Cardiac septum (tissue), 1 donor: ENCODE measurements at regions of chr1 and their contacts with region 1.

Region 1: GRCh38 chr1:8702850-8703810 is 114.3 kb downstream of the RERE start:
- DNase-seq: peak; percentile 95

Region 2: DNA sequence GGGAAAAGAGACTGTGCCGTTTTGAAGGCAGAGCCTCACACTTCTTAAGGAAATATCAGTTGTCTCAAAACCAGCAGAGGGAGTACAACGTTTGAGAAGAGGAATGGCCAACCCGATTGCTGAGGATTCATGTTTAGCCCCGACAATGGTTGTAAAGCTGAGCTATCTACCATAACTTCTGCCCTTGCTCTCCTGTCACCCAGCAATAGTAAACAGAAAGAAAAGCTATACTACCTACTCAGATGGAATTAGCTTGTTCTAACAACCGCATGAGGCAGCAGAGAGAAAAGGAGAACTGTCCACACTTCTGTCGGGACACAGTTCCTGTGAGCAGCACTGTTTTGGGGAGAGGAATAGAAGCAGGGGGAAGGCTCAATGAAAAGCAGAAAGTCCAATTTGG is 294.0 kb before region 1 on chr1:
- intact Hi-C with region 1: loop called (anchors 5 kb)
- DNase-seq: no peak

Region 3: DNA sequence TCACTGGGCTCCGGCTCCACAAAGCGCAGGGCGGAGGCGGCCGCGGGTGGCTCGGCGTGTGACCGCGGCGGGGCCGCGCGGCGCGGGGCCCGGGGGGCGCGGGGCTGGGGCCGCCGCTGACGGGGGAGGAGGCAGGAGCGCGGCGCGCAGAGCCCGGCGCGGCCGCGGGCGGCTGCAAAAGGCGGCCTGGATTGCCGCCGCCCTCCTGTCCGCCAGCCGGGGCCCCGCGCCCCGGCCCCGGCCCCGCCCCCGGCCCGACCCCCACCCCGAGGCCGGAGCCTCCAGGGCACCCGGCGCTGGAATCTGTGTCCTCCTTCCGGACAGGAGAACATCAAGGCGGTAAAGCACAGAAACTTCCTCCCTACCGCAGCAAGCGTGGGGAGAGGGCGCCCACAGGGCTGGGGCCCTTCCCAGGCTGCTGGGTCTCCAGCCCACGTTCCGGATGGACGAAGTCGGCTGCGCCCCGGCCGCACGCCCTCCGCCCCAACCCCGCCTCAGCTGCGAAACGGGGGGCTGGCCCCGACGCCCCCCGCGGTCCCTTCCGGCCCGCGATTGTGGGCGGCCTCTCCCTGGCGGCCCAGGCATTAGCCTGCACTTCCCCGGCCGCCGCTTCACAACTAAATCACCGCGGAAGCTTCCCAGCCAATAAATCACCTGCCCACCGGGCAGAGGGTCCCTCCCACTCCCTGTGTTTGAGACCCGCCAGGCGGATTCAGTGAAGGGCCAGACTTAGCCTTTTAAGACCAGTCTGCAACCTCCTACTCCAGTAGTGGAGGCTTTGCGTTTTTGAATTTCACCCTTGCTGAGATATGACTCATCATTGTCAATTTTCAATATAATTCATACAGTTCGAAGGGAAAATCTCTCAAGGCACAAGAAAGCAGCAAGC is 279.2 kb before region 1 on chr1:
- intact Hi-C with region 1: loop called (anchors 2 kb)
- DNase-seq: peak; percentile 79

Region 4: DNA sequence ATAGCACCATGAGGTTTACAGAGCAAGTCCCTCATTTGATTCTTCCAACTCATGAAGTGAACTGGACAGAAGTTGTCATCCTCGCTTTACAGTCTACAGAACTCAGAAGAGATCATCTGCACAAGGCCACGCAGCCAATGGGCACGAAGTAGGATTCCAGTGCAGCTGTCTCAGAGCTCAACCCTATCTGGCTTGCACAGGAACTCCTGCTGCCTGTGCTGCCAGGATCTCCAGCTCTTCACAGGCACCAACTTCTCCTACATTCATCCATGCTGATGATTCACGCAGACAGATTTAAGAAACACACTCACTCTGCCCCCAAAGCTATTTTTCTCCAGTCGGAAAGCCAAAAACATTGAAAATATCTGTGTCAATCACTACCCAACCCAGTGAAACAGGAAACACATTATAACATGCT is 42.7 kb before region 1 on chr1:
- intact Hi-C with region 1: loop called (anchors 5 kb)
- DNase-seq: peak; percentile 76

Region 5: GRCh38 chr1:8817406-8818324 is 114.5 kb after region 1 on chr1 and contains the start of gene RERE:
- intact Hi-C with region 1: loop called (anchors 10 kb)
- DNase-seq: peak; percentile 97
- total RNA-seq, gene RERE: 102 TPM

Region 6: DNA sequence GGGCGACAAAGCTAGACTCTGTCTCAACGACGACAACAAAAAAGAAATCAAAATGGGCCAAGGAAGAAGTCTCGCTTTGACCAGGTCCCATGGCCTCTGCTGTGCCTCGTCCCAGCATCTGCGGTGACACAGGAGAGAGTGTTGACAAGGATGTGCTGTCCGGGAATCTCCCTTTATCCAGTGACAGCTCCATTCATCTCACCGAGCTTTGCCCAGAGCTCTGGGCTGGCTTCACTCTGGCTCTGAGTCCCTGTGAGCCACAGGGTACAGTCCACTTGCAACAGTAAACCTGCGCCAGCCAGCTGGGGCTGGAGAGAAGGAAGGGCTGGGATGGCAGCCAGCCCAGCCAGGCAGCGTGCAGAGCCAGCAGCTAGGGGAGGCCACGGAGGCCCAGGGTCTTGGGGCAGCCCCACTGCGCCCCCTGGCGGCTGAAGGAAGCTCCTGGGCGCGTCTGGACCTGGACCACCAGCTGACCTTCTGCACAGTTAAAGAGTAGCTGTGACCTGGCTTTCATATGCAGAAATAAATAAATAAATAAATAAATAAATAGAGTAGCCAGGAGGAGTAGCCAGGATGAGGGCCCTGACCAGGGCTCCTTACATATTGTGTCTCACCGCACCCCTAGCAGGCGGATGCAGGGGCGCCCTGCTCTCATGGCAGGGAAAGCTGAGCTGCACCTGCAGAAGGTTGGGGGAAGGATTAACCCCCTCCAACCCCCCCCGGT is 145.7 kb after region 1 on chr1:
- intact Hi-C with region 1: loop called (anchors 5 kb)
- DNase-seq: peak; percentile 94